ENCODE measurements at regions of chr19 and their contacts with region 1.

Region 1: DNA sequence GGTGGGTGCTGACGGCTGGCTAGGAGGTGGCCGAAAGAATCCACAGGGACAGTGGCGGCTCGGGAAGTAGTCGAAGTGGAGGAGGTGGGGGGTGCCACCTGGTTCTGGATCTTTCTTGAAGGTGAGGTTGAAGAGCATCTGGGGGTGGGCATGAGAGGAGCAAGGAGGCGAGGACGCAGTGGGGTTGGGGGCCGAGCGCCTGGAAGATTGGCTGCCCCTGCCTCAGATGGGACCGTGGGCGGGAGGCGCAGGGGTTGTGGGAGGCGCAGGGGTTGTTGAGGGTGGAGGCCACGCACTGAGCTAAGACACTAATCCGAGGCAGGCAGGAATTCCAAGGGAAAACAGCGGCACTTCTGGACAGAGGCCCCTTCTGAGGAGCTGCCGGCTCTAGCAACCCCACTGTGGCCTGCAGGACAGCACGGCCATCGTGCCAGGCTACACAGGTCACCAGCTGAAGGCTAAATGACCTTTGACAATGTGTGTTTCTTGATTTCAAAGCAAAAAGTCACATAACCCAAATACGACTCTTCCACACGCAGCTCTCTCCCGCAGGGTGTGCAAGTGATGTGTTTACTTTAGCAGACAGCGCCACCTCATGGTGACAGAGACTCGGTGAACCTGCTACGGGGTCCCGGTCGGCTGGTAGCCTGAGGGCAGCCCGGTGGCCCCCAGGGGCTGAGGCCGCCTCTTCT is 44.1 kb upstream of the RANBP3 start:
- DNase-seq: peak; percentile 82
- ATAC-seq: peak; percentile 93

Region 2: GRCh38 chr19:5738426-5738825 is 283.6 kb before region 1 on chr19:
- intact Hi-C with region 1: no loop called
- DNase-seq: no peak
- ATAC-seq: no peak

Region 3: DNA sequence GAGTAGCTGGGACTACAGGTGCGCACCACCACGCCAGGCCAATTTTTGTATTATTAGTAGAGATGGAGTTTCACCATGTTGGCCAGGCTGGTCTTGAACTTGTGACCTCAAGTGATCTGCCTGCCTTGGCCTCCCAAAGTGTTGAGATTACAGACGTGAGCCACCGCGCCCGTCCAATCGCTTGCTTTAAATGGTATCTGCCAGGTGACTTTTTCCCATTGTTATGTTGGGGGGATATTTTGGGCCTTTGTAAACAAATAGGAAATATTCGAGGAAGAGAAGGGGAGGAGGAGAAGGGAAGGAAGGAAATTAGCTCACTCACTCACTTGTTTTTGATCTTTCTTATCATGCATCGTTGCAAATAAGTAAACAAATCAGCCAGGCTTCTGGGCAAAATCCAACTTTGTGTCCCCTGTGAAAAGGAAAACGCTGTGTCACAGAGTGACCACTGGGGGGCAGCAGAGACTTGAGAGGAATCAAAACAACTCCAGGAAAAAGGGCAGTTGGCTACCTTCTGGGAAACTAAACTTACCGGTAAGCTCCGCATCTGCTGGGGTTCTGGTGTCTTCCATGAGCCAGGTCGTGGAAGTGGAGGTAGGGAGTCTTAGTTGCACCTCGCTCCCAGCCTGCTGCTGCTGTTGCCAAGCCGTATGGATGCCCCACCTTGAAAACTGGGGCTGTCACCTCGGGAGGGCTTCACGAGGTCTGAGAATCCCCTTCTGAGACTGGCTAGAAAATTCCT is 34.8 kb before region 1 on chr19:
- intact Hi-C with region 1: loop called (anchors 2 kb)
- DNase-seq: peak; percentile 69
- ATAC-seq: peak; percentile 59